Heart right ventricle (tissue), 16 donors: ENCODE measurements at regions of chr11 and their contacts with region 1.

Region 1: GRCh38 chr11:103537904-103538502 is 428.8 kb downstream of the DYNC2H1 start:
- DNase-seq: no peak
- ATAC-seq: no peak
- H3K4me3 ChIP-seq: no peak overlapping the region
- H3K27ac ChIP-seq: no peak overlapping the region
- H3K4me1 ChIP-seq: peaks cover 0 to 23% (median 19%) of the 10 kb centered on the region in 9 donors
- H3K27me3 ChIP-seq: no peaks in the 10 kb centered on the region
- CTCF ChIP-seq: peak in 8 of 9 donors; percentile 18 to 62 (median 48)

Region 2: GRCh38 chr11:102868339-102868738 is 669.7 kb before region 1 on chr11:
- intact Hi-C with region 1: no loop called
- DNase-seq: no peak
- ATAC-seq: no peak
- H3K4me3 ChIP-seq: no peak overlapping the region
- H3K27ac ChIP-seq: no peak overlapping the region
- H3K4me1 ChIP-seq: no peaks in the 10 kb centered on the region
- H3K27me3 ChIP-seq: no peaks in the 10 kb centered on the region
- CTCF ChIP-seq: no peak

Region 3: DNA sequence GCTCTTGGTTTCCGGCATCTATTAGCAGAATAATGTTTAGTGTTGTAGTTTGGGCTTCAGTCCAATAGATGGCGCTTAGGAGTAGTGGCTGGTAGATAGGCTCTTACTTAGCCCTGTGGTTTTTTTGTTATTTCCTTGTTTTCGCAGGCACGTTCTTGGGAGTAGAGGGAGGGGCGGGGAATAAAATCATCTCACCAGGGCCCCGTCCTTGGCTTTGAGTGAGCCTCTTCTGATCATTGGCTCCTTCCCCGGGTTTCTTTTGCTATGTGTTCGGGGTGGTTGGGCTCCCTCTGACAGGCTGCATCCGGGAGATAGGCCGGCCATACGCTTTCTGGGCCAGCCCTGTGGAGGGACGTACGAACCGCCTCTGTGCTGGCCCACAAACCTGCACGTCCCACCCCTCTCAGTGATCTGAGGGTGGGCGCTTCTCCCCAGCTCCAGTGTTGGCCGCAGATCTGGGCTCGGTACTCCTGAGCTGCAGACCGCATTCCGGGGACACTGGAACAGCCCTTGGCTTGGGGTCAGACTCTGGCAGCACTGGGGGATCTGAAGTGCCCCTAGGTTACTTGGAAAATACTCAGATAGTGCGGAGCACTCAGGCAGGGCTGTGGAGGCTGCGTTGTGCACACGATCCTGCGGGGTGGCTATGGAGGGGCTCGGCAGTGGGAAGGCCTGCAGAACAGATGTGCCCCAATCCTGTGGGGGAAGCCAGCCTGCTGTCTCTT is 211.8 kb before region 1 on chr11:
- intact Hi-C with region 1: loop called in 3 of 10 experiments (anchors 5 to 10 kb)
- DNase-seq: peak in 1 of 2 donors; percentile 42
- ATAC-seq: peak; percentile 38 to 79 (median 76)
- H3K4me3 ChIP-seq: no peak overlapping the region
- H3K27ac ChIP-seq: no peak overlapping the region
- H3K4me1 ChIP-seq: peaks cover 0 to 17% (median 7%) of the 10 kb centered on the region in 9 donors
- H3K27me3 ChIP-seq: no peaks in the 10 kb centered on the region
- CTCF ChIP-seq: peak; percentile 31 to 75 (median 63)

Region 4: GRCh38 chr11:103395612-103396011 is 142.4 kb before region 1 on chr11:
- intact Hi-C with region 1: no loop called
- DNase-seq: no peak
- ATAC-seq: no peak
- H3K4me3 ChIP-seq: no peak overlapping the region
- H3K27ac ChIP-seq: no peak overlapping the region
- H3K4me1 ChIP-seq: no peaks in the 10 kb centered on the region
- H3K27me3 ChIP-seq: no peaks in the 10 kb centered on the region
- CTCF ChIP-seq: no peak

Region 5: DNA sequence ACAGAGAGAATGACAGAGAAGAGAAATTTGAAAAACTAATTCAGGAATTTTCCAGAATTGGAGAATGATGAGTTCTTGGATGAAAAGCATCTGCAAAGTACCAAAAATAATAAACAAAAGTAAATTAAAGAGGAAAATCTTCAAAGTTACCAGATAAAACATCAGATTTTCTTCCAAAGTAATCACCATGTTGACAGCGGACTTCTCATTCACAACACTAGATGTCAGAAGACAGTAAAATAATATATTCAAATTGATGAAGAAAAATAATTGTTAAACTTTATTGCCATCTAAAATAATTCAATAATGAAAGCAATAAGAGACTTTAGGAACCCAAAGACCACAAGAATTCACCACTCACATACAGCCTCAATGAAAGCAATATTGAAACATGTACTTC is 73.6 kb before region 1 on chr11:
- intact Hi-C with region 1: no loop called
- DNase-seq: no peak
- ATAC-seq: no peak
- H3K4me3 ChIP-seq: no peak overlapping the region
- H3K27ac ChIP-seq: no peak overlapping the region
- H3K4me1 ChIP-seq: peaks cover 0 to 5% (median 0%) of the 10 kb centered on the region in 9 donors
- H3K27me3 ChIP-seq: no peaks in the 10 kb centered on the region
- CTCF ChIP-seq: peak in 2 of 9 donors; percentile 3 to 11